ENCODE measurements at regions of chr3 and their contacts with region 1.

Region 1: DNA sequence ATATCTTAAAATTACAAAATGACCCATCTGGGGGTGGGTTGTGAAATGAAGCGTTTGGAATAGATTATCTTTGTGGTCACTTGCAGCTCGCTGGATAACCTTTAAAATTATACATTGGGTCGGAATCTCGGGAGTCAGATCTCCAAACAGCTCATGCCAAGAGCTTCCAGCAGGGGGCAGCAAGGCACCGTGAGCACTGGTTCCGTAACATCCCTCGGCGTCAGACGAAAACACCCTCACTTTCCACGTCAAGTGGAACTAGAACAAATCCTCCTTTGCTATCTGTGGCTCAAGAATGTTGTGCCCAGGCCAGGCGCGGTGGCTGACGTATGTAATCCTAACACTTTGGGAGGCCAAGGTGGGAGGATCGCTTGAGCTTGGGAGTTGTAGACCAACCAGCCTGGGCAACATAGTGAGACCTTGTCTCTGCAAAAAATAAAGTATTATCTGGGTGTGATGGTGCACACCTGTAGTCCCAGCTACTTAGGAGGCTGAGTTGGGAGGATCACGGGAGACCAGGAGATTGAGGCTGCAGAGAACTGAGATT is 31.1 kb downstream of the UMPS start:
- DNase-seq: peak; percentile 60
- H3K4me3 Mint-ChIP-seq: no peak overlapping the region
- H3K27ac Mint-ChIP-seq: no peak overlapping the region
- H3K4me1 Mint-ChIP-seq: peaks cover 3% of the 10 kb centered on the region
- H3K27me3 Mint-ChIP-seq: peaks cover 2% of the 10 kb centered on the region

Region 2: GRCh38 chr3:124627501-124627908 is 133.8 kb before region 1 on chr3:
- intact Hi-C with region 1: no loop called
- DNase-seq: no peak
- H3K4me3 Mint-ChIP-seq: no peak overlapping the region
- H3K27ac Mint-ChIP-seq: no peak overlapping the region
- H3K4me1 Mint-ChIP-seq: peaks cover 2% of the 10 kb centered on the region
- H3K27me3 Mint-ChIP-seq: peaks cover 46% of the 10 kb centered on the region

Region 3: GRCh38 chr3:124905849-124906248 is 144.5 kb after region 1 on chr3:
- intact Hi-C with region 1: loop called (anchors 1 kb)
- DNase-seq: no peak
- H3K4me3 Mint-ChIP-seq: no peak overlapping the region
- H3K27ac Mint-ChIP-seq: no peak overlapping the region
- H3K4me1 Mint-ChIP-seq: peaks cover 2% of the 10 kb centered on the region
- H3K27me3 Mint-ChIP-seq: peaks cover 14% of the 10 kb centered on the region

Region 4: GRCh38 chr3:125585595-125586223 is 824.4 kb after region 1 on chr3:
- intact Hi-C with region 1: loop called (anchors 5 kb)
- DNase-seq: peak; percentile 22
- H3K4me3 Mint-ChIP-seq: no peak overlapping the region
- H3K27ac Mint-ChIP-seq: no peak overlapping the region
- H3K4me1 Mint-ChIP-seq: peaks cover 10% of the 10 kb centered on the region
- H3K27me3 Mint-ChIP-seq: no peaks in the 10 kb centered on the region

Measured in activated T-helper 2 cell treated with anti-CD3 and anti-CD28 coated beads, Interferon-gamma antibody, Interleukin-2, Interleukin-4, amounts not matched to agents 10 μg/mL and 5 μg/mL and 100 μg/mL, durations not matched to agents 14 hours and 24 hours and 36 hours (primary cell).